ENCODE measurements at regions of chr4 and their contacts with region 1.

Region 1: GRCh38 chr4:15649914-15650545 is 5.1 kb downstream of the FBXL5 start:
- DNase-seq: peak; percentile 77
- H3K4me3 Mint-ChIP-seq: peak overlapping the region; percentile 50
- H3K27ac Mint-ChIP-seq: peak overlapping the region; percentile 77
- H3K4me1 Mint-ChIP-seq: peaks cover 64% of the 10 kb centered on the region
- H3K27me3 Mint-ChIP-seq: no peaks in the 10 kb centered on the region

Region 2: GRCh38 chr4:15117270-15117946 is 532.6 kb before region 1 on chr4:
- CTCF ChIA-PET with region 1: no interaction called
- intact Hi-C with region 1: loop called (anchors 1 kb)
- DNase-seq: peak; percentile 13
- H3K4me3 Mint-ChIP-seq: no peak overlapping the region
- H3K27ac Mint-ChIP-seq: no peak overlapping the region
- H3K4me1 Mint-ChIP-seq: peaks cover 11% of the 10 kb centered on the region
- H3K27me3 Mint-ChIP-seq: peaks cover 24% of the 10 kb centered on the region

Region 3: DNA sequence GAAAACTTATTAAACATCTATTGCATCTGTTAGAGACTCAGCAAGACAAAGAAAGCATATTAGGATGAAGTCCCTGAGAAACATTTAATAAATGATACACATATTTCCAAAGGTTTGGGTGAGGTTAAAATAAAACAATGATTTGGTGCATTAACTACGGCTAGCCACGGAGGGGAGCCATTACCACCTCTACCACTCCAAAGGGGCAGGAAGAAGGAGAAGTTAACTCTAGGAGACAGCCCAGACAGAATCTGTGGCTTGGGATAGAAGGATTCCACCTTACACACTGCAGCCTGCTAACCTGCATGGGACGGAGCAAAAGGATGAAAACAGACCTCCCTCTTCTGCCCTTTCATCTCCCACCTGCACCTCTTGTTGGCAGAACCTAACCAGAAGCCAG is 411.3 kb before region 1 on chr4:
- CTCF ChIA-PET with region 1: interaction called, 6 read pairs
- intact Hi-C with region 1: loop called (anchors 1 kb)
- DNase-seq: peak; percentile 66
- H3K4me3 Mint-ChIP-seq: no peak overlapping the region
- H3K27ac Mint-ChIP-seq: no peak overlapping the region
- H3K4me1 Mint-ChIP-seq: peaks cover 9% of the 10 kb centered on the region
- H3K27me3 Mint-ChIP-seq: no peaks in the 10 kb centered on the region

Region 4: GRCh38 chr4:15396157-15396800 is 253.8 kb before region 1 on chr4:
- CTCF ChIA-PET with region 1: no interaction called
- intact Hi-C with region 1: loop called (anchors 1 kb)
- DNase-seq: peak; percentile 79
- H3K4me3 Mint-ChIP-seq: no peak overlapping the region
- H3K27ac Mint-ChIP-seq: no peak overlapping the region
- H3K4me1 Mint-ChIP-seq: peaks cover 26% of the 10 kb centered on the region
- H3K27me3 Mint-ChIP-seq: no peaks in the 10 kb centered on the region

Region 5: DNA sequence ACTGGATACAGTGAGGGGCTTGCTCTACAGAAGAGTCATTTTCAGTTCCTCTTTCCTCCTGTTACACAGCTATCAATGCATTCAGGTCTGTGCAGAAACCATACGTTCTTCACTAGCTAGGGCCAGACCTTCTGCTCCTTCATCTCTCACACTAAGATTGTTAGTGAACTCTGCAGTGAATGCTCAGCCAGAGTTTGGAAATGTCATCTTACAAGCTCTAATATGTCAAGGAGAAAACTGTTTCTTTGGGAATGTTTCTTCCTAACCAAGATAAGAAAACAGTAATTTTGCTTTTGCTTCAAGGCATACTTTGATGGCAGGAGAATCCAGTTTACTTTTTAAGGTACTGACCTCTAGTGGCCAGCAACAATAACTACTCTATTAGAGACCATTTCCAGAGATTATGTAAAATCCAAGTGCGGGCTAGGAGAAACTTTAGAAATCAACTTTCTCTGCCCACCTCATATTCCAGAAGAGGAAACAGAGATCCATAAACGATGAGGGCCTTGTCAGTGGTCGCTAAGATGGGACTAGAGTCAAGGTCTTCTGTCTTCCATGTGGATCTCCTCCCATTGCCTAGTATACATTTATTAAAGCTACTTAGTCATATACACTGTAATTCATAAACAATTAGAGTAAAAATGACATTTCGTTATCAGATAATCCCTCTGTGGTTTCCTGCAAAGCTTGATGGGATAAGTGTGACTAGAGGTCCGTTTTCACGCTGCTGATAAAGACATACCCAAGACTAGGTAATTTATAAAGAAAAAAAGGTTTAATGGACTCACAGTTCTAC is 192.4 kb before region 1 on chr4:
- CTCF ChIA-PET with region 1: interaction called, 6 read pairs
- intact Hi-C with region 1: loop called (anchors 1 kb)
- DNase-seq: no peak
- H3K4me3 Mint-ChIP-seq: no peak overlapping the region
- H3K27ac Mint-ChIP-seq: no peak overlapping the region
- H3K4me1 Mint-ChIP-seq: peaks cover 6% of the 10 kb centered on the region
- H3K27me3 Mint-ChIP-seq: no peaks in the 10 kb centered on the region

Region 6: GRCh38 chr4:16120720-16121119 is 470.7 kb after region 1 on chr4:
- CTCF ChIA-PET with region 1: no interaction called
- intact Hi-C with region 1: no loop called
- DNase-seq: peak; percentile 33
- H3K4me3 Mint-ChIP-seq: no peak overlapping the region
- H3K27ac Mint-ChIP-seq: no peak overlapping the region
- H3K4me1 Mint-ChIP-seq: peaks cover 25% of the 10 kb centered on the region
- H3K27me3 Mint-ChIP-seq: peaks cover 4% of the 10 kb centered on the region